ENCODE measurements at regions of chr5 and their contacts with region 1.

Region 1: GRCh38 chr5:124748687-124749594 is 2.5 kb upstream of the ZNF608 start:
- DNase-seq: peak; percentile 86
- ATAC-seq: peak; percentile 89
- H3K4me3 ChIP-seq: peak overlapping the region; percentile 83
- H3K27ac ChIP-seq: peak overlapping the region; percentile 94
- H3K4me1 ChIP-seq: peaks cover 3% of the 10 kb centered on the region; the same call in 1 of the 2 replicates
- H3K27me3 ChIP-seq: 0 out of 4 replicates have a peak, but pooled peaks cover 0 to 4% of the 10 kb centered on the region in 2 experiments
- CTCF ChIP-seq: no peak
- EP300 ChIP-seq: no peak
- POLR2A ChIP-seq: peak; percentile 48; the same call in 1 of the 2 replicates
- RAD21 ChIP-seq: no peak

Region 2: GRCh38 chr5:124583469-124584350 is 165.2 kb before region 1 on chr5:
- CTCF ChIA-PET with region 1: no interaction called
- POLR2A ChIA-PET with region 1: no interaction called
- RAD21 ChIA-PET with region 1: interaction called, 4 read pairs
- SMC1A ChIA-PET with region 1: no interaction called
- in situ Hi-C with region 1: no loop called
- intact Hi-C with region 1: loop called (anchors 5 kb)
- DNase-seq: peak; percentile 89
- ATAC-seq: peak; percentile 99
- H3K4me3 ChIP-seq: no peak overlapping the region
- H3K27ac ChIP-seq: peak overlapping the region; percentile 42
- H3K4me1 ChIP-seq: peaks cover 14% of the 10 kb centered on the region; the same call in 1 of the 2 replicates
- H3K27me3 ChIP-seq: peaks cover 0 to 8% of the 10 kb centered on the region in 2 experiments
- CTCF ChIP-seq: no peak
- EP300 ChIP-seq: peak; percentile 59 to 95; a peak in 3 of 4 replicates
- POLR2A ChIP-seq: no peak
- RAD21 ChIP-seq: no peak

Region 3: GRCh38 chr5:124735169-124735858 is 13.6 kb before region 1 on chr5:
- CTCF ChIA-PET with region 1: interaction called, 7 read pairs
- POLR2A ChIA-PET with region 1: interaction called, 14 read pairs
- RAD21 ChIA-PET with region 1: interaction called, 31 read pairs
- SMC1A ChIA-PET with region 1: interaction called, 20 read pairs
- in situ Hi-C with region 1: no loop called
- intact Hi-C with region 1: no loop called
- DNase-seq: no peak
- ATAC-seq: no peak
- H3K4me3 ChIP-seq: peak overlapping the region; percentile 9; the same call in 1 of the 2 replicates
- H3K27ac ChIP-seq: no peak overlapping the region
- H3K4me1 ChIP-seq: peaks cover 9% of the 10 kb centered on the region
- H3K27me3 ChIP-seq: no peaks in the 10 kb centered on the region
- CTCF ChIP-seq: no peak
- EP300 ChIP-seq: no peak
- POLR2A ChIP-seq: no peak
- RAD21 ChIP-seq: no peak

Region 4: GRCh38 chr5:124902097-124902821 is 153.3 kb after region 1 on chr5:
- CTCF ChIA-PET with region 1: interaction called, 12 read pairs
- POLR2A ChIA-PET with region 1: interaction called, 7 read pairs
- RAD21 ChIA-PET with region 1: interaction called, 37 read pairs
- SMC1A ChIA-PET with region 1: interaction called, 65 read pairs
- in situ Hi-C with region 1: no loop called
- intact Hi-C with region 1: loop called (anchors 2 kb)
- DNase-seq: peak; percentile 92
- ATAC-seq: peak; percentile 99
- H3K4me3 ChIP-seq: 0 out of 2 replicates have a peak overlapping the region, but pooled peaks have one; percentile 15
- H3K27ac ChIP-seq: peak overlapping the region; percentile 59
- H3K4me1 ChIP-seq: peaks cover 17% of the 10 kb centered on the region
- H3K27me3 ChIP-seq: no peaks in the 10 kb centered on the region
- CTCF ChIP-seq: no peak
- EP300 ChIP-seq: peak; percentile 77 to 90; a peak in 3 of 4 replicates
- POLR2A ChIP-seq: 0 out of 2 replicates have a peak, but pooled peaks have one; percentile 33
- RAD21 ChIP-seq: peak; percentile 33; the same call in 1 of the 2 replicates

Region 5: DNA sequence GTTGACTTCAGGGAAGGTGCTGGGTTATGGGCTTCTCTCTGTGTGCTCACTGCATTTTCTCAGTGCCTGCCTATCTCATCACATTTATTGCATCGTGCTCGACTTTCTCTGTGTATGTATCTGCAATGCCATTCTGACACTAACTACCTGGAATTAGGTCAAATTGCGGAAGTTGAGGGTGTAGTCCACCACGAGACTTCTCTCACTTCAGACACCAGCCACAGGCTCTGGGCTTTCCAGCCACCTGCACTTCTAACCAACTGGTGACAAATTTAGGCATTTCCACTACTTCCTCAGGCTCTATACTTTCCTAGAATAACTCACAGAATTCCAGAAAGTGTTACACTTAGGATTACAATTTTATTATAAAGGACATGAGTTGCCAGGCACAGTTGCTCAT is 186.1 kb after region 1 on chr5:
- CTCF ChIA-PET with region 1: interaction called, 3 read pairs
- POLR2A ChIA-PET with region 1: interaction called, 4 read pairs
- RAD21 ChIA-PET with region 1: interaction called, 27 read pairs
- SMC1A ChIA-PET with region 1: interaction called, 19 read pairs
- in situ Hi-C with region 1: no loop called
- intact Hi-C with region 1: loop called (anchors 1 kb)
- DNase-seq: peak; percentile 87
- ATAC-seq: peak; percentile 80
- H3K4me3 ChIP-seq: no peak overlapping the region
- H3K27ac ChIP-seq: peak overlapping the region; percentile 89
- H3K4me1 ChIP-seq: peaks cover 21% of the 10 kb centered on the region
- H3K27me3 ChIP-seq: no peaks in the 10 kb centered on the region
- CTCF ChIP-seq: no peak
- EP300 ChIP-seq: peak; percentile 91 to 95
- POLR2A ChIP-seq: peak; percentile 30; the same call in 1 of the 2 replicates
- RAD21 ChIP-seq: peak; percentile 29; the same call in 1 of the 2 replicates

Measured in GM12878 (cell line).